ENCODE measurements at regions of chr10 and their contacts with region 1.

Region 1: DNA sequence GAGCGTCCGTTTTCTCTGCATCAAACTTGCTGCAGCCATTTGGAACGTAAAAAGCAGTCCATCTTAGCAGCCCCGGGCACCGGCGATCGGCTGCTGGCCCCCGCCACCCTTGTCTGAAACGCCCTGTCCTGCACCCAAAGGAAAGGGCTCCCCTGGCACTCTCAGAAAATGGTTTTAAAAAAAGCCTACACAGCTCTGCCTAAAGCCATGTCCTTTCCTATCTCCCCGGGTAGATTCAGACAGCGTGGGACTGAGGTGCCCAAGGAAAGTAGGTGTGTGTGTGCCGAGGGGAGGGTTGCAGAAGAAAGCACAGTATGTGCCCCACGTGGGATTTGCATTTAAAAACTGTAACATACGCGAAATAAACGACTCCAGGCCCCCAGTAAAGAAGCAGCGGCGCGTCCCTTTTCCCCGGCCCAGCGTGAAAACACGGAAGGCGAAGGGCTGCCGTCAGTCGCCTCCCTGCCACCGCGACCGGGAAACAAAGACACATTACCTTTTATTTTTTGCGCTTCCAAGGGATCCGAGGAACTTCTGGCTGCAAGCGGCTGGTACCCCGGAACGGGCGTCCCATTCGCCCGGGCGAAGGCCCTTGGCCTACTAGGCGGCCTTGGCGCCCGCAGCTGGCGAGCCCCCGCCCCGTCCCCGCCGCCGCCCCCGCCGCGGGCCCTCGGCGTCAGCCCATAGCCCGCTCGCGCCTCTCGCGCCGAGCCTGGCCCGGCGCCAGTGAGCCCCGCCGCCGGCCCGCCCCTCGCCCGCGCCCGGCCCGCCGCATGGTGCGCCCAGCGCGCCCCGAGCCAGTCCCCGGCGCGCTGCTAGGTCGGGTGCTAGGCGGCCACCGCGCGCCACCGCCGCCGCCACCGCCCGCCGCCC is 304.6 kb downstream of the PRPF18 start:
- DNase-seq: peak; percentile 25
- ATAC-seq: peak; percentile 31
- H3K4me3 ChIP-seq: peak overlapping the region; percentile 79
- H3K27ac ChIP-seq: no peak overlapping the region
- H3K4me1 ChIP-seq: peaks cover 41% of the 10 kb centered on the region
- H3K27me3 ChIP-seq: no peaks in the 10 kb centered on the region
- CTCF ChIP-seq: no peak

Region 2: DNA sequence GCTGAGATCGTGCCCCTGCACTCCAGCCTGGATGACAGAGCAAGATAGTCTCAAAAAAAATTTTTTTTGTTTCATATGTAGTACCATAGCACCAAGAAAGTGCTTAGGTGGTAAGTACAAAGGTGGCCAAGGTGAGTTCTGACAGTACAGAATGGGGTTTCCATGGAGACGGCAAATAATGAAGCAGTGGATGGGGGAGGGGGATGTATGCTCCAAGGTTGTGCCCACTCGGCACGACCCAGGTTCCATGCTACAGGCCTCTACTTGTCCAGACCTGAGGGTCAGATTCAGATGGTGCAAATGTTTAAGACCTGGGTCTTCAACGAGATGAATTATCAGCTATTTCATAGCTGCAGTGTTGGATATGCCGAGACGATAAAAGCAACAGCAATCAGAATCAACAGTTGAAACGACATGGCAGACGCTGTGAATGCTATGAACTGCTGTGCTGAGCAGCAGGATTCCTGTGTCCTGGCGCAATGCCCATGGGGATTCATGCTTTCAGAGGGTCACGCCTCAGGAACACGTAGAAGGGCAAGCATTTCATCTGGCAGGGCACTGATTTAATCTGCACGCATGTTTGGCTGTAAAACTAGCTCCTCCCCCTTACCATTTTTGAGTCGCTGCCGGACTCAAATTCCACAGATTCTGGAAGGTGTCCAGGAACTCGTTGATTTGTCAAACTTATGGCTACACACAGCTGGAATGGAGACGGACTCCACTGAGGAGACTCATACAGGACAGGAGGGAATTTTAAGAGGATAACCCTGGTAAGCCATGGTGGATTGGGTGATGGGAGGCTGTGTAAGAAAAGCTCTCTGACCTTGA is 182.9 kb after region 1 on chr10:
- CTCF ChIA-PET with region 1: no interaction called
- POLR2A ChIA-PET with region 1: no interaction called
- intact Hi-C with region 1: loop called (anchors 10 kb)
- DNase-seq: peak; percentile 95
- ATAC-seq: peak; percentile 93
- H3K4me3 ChIP-seq: peak overlapping the region; percentile 49
- H3K27ac ChIP-seq: peak overlapping the region; percentile 82
- H3K4me1 ChIP-seq: peaks cover 13% of the 10 kb centered on the region
- H3K27me3 ChIP-seq: no peaks in the 10 kb centered on the region
- CTCF ChIP-seq: no peak